Naive thymus-derived CD8-positive, alpha-beta T cell (primary cell): ENCODE measurements at regions of chr19 and their contacts with region 1.

Region 1: GRCh38 chr19:45862564-45863334 is at the start of gene SYMPK:
- DNase-seq: peak; percentile 94 to 99 (median 98)
- ATAC-seq: peak; percentile 94 to 98
- H3K4me3 Mint-ChIP-seq: peak within 1 kb of the TSS; percentile 89 to 100 (median 96)
- H3K27ac Mint-ChIP-seq: peak within 1 kb of the TSS; percentile 78 to 99 (median 96)
- H3K4me1 Mint-ChIP-seq: peaks cover 17 to 43% (median 38%) of the 10 kb centered on the region in 4 donors
- H3K27me3 Mint-ChIP-seq: peaks cover 5 to 24% (median 20%) of the 10 kb centered on the region in 5 donors
- polyA plus RNA-seq, gene SYMPK: 4.4 to 15.4 (median 13.8) TPM

Region 2: DNA sequence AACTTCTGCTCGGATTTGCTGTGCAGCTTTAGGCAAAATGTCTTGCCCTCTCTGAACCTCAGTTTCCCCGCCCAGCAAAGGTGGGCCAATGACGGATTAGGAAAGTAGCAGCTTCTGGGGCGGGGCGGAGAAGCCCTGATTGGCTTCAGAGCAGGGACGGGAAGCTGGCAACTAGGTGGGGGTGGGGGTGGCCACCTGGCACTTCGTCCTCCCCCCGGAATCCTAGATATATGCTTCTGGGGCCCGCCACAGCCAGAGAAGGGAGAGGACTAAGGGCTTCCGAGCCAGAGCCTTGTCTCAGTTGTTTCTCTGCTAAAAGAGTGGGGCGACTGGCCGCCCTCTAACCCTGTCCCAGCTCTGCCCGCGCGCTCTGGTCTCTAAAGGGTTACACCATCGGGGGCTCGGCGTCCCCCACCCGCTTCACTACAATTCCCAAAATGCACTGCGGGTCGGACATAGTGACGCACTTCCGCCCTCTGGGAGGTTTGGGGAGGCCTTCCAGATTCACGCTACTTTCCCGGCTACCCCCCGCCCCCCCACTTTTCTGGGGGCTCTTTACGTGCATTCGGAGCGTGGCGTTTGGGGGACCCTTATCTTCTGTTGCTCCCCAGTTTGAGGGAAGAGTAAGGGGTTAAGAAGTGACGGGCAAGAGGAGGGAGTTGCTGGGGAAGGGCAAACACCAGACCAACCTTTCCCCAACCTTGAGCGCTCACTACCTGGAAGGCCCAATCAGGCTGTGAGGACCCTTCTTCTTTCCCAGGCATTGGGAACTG is 23.9 kb after region 1 on chr19:
- POLR2A ChIA-PET with region 1: interaction called, 33 read pairs
- DNase-seq: peak; percentile 77 to 94 (median 90)
- ATAC-seq: peak; percentile 65 to 75
- H3K4me3 Mint-ChIP-seq: peak overlapping the region; percentile 91 to 99 (median 98)
- H3K27ac Mint-ChIP-seq: peak overlapping the region; percentile 95 to 100 (median 98)
- H3K4me1 Mint-ChIP-seq: peaks cover 16 to 28% (median 25%) of the 10 kb centered on the region in 4 donors
- H3K27me3 Mint-ChIP-seq: no peaks in the 10 kb centered on the region

Region 3: GRCh38 chr19:45902651-45903625 is 40.2 kb after region 1 on chr19:
- POLR2A ChIA-PET with region 1: interaction called, 15 read pairs
- DNase-seq: peak; percentile 98 to 100 (median 100)
- ATAC-seq: peak; percentile 83 to 85
- H3K4me3 Mint-ChIP-seq: peak overlapping the region; percentile 83 to 98 (median 94)
- H3K27ac Mint-ChIP-seq: peak overlapping the region; percentile 67 to 95 (median 90)
- H3K4me1 Mint-ChIP-seq: peaks cover 5 to 26% (median 23%) of the 10 kb centered on the region in 4 donors
- H3K27me3 Mint-ChIP-seq: peaks cover 0 to 3% (median 1%) of the 10 kb centered on the region in 5 donors